Activated naive CD4-positive, alpha-beta T cell treated with anti-CD3 and anti-CD28 coated beads for 36 hours (primary cell): ENCODE measurements at regions of chr3 and their contacts with region 1.

Region 1: GRCh38 chr3:62732183-62732904 is 142.9 kb downstream of the CADPS start:
- DNase-seq: no peak
- H3K4me3 Mint-ChIP-seq: no peak overlapping the region
- H3K27ac Mint-ChIP-seq: no peak overlapping the region
- H3K4me1 Mint-ChIP-seq: no peaks in the 10 kb centered on the region
- H3K27me3 Mint-ChIP-seq: peaks cover 3% of the 10 kb centered on the region

Region 2: DNA sequence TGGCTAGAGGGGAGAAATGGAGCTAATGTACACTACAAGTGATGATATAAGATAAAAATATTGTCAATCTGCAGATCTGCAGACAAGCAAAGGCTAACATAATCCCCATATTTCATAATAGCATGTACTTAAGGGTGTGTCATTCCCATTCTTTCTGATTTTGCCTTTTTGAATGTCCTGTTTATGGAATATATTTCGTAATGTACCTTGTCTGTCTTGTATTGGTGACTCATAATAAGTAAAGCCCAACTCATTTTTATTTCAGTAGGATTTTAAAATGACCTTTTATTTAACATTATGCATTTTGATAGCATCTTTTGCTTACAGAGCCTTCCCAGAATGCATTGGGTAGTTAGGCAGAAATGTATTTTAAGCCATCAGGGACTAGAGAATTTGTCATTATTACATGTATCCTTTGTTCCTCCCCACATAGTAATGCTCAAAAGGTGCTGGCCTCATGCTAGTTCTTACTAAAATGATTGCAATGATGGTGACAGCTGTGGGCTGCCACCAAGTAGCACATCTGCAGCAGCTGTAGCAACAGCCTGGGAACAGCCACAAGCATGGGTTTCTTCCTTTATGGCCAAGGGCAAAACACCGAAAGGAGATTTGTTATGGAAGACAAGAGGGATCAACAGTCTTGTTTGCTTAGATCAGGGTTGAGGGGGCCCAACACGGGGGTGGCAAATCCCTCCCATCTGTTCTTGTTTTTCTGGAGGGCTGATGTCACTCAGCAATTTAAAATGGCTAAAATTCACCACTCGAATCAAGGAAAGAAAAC is 45.6 kb before region 1 on chr3:
- CTCF ChIA-PET with region 1: no interaction called
- intact Hi-C with region 1: no loop called
- DNase-seq: no peak
- H3K4me3 Mint-ChIP-seq: no peak overlapping the region
- H3K27ac Mint-ChIP-seq: no peak overlapping the region
- H3K4me1 Mint-ChIP-seq: no peaks in the 10 kb centered on the region
- H3K27me3 Mint-ChIP-seq: peaks cover 10% of the 10 kb centered on the region

Region 3: GRCh38 chr3:62785387-62785982 is 53.1 kb after region 1 on chr3:
- CTCF ChIA-PET with region 1: no interaction called
- intact Hi-C with region 1: loop called (anchors 10 kb)
- DNase-seq: no peak
- H3K4me3 Mint-ChIP-seq: no peak overlapping the region
- H3K27ac Mint-ChIP-seq: no peak overlapping the region
- H3K4me1 Mint-ChIP-seq: no peaks in the 10 kb centered on the region
- H3K27me3 Mint-ChIP-seq: peaks cover 4% of the 10 kb centered on the region